ENCODE measurements at regions of chr6 and their contacts with region 1.

Region 1: DNA sequence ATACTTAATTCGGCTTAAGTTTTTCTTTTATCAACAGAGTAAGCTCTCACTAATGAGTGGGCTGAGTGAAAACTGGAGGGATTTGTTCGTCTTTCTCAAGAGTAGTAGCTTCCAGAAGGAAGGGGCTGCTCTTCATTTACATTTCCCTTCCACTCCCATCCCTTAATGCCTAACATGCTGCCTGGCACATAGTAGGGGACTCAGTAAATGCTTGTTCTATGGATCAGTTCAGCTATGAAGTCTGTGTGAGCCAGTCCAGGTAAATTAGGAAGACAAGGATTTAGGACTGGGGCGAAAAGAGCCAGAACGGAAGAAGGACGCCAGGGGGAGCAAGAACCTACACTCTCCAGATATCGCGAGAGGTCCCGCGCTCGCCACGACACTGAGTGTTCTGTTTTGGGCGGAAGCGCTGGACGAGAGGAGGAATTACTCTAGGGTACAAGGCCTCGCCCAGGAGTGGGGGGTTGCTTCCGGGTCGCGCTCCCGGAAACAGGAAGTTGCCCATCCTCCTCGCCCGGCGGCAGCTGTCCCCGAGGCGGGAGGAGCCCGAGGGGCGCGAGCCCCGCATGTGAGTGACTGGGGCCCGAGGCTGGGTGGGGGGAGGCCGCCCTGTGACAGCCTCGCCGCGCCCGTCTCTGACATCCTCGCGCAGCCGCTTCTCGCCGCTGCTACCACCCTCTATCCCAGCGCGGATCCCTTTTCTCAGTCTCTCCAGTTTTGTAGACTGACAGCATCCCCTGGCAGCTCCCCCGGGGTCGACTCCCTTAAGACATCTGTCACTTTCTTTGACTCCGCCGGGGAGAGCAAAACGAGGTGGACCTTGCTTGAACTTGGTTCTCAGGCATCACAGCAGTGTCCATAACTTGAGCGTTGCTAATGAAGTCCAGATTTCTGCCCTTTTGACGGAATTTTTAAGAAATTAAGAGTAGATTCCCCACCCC is at the start of gene C6orf89:
- DNase-seq: peak; percentile 92
- ATAC-seq: peak; percentile 99
- H3K4me3 Mint-ChIP-seq: peak within 1 kb of the TSS; percentile 91
- H3K27ac Mint-ChIP-seq: peak within 1 kb of the TSS; percentile 88
- H3K4me1 Mint-ChIP-seq: peaks cover 24% of the 10 kb centered on the region
- H3K27me3 Mint-ChIP-seq: no peaks in the 10 kb centered on the region
- total RNA-seq, gene C6orf89: 45.3 to 46.0 TPM

Region 2: GRCh38 chr6:36874443-36875249 is 11.1 kb before region 1 on chr6 and contains the start of gene PPIL1:
- POLR2A ChIA-PET with region 1: interaction called, 21 read pairs
- DNase-seq: peak; percentile 87
- ATAC-seq: peak; percentile 91
- H3K4me3 Mint-ChIP-seq: peak within 1 kb of the TSS; percentile 97
- H3K27ac Mint-ChIP-seq: peak within 1 kb of the TSS; percentile 98
- H3K4me1 Mint-ChIP-seq: peaks cover 28% of the 10 kb centered on the region
- H3K27me3 Mint-ChIP-seq: peaks cover 3% of the 10 kb centered on the region
- total RNA-seq, gene PPIL1: 18.5 to 19.9 TPM

Region 3: GRCh38 chr6:36929607-36930006 is 43.9 kb after region 1 on chr6:
- POLR2A ChIA-PET with region 1: no interaction called
- DNase-seq: no peak
- ATAC-seq: no peak
- H3K4me3 Mint-ChIP-seq: no peak overlapping the region
- H3K27ac Mint-ChIP-seq: no peak overlapping the region
- H3K4me1 Mint-ChIP-seq: peaks cover 13% of the 10 kb centered on the region
- H3K27me3 Mint-ChIP-seq: no peaks in the 10 kb centered on the region

Region 4: GRCh38 chr6:37018198-37019064 is 132.7 kb after region 1 on chr6:
- POLR2A ChIA-PET with region 1: interaction called, 13 read pairs
- DNase-seq: peak; percentile 90
- ATAC-seq: peak; percentile 94
- H3K4me3 Mint-ChIP-seq: peak overlapping the region; percentile 31
- H3K27ac Mint-ChIP-seq: peak overlapping the region; percentile 70
- H3K4me1 Mint-ChIP-seq: peaks cover 51% of the 10 kb centered on the region
- H3K27me3 Mint-ChIP-seq: no peaks in the 10 kb centered on the region

Measured in activated naive CD8-positive, alpha-beta T cell treated with anti-CD3 and anti-CD28 coated beads, Interleukin-2, amount 10 ng/mL, durations not matched to agents 7 days and 5 days (primary cell).